ENCODE measurements at regions of chrX and their contacts with region 1.

Region 1: DNA sequence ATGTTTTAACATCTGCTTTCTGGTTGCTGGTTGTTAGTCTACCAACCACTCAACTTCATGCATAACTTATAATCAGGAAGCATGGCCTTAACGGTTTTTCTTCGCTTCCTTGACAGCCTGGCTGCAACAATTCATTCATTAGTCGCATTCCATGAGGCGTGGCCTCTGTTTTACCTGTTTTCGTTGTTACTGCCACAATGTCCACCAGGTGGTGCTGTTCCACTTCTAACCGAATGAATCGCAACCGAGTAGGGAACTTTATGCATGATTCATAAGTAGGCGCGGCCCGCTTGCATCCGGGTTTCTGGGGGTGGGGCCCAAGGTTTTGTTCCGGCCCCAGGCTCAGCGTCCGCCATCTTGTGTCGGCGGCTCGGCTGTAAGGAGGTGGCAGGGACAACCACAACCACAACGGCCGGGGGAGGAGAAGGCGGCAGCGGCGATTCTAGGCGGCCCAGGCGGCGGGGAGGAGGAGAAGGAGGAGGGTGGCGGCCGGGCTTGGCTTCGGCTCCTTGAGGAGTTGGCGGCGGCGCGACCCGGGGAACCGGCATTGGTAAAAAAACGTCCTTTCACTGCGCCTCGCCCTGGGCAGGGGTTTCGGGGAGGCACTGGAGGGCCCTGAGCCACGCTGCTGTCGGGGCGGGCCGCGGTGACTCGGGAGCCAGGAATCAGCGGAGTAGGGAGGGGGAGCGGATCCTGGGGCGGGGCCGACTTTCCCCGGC is at the start of gene UBA1:
- DNase-seq: peak; percentile 72
- ATAC-seq: peak; percentile 71
- H3K4me3 Mint-ChIP-seq: peak within 1 kb of the TSS; percentile 95
- H3K27ac Mint-ChIP-seq: peak within 1 kb of the TSS; percentile 96
- H3K4me1 Mint-ChIP-seq: peaks cover 58% of the 10 kb centered on the region
- H3K27me3 Mint-ChIP-seq: no peaks in the 10 kb centered on the region
- CTCF ChIP-seq: no peak
- total RNA-seq, gene UBA1: 229 and 235 TPM in 2 replicates

Region 2: GRCh38 chrX:47217642-47218279 is 24.1 kb after region 1 on chrX:
- CTCF ChIA-PET with region 1: interaction called, 3 read pairs
- POLR2A ChIA-PET with region 1: interaction called, 15 read pairs
- intact Hi-C with region 1: loop called (anchors 1 kb)
- DNase-seq: peak; percentile 84
- ATAC-seq: peak; percentile 80
- H3K4me3 Mint-ChIP-seq: peak overlapping the region; percentile 92
- H3K27ac Mint-ChIP-seq: peak overlapping the region; percentile 99
- H3K4me1 Mint-ChIP-seq: peaks cover 40% of the 10 kb centered on the region
- H3K27me3 Mint-ChIP-seq: no peaks in the 10 kb centered on the region
- CTCF ChIP-seq: no peak

Region 3: DNA sequence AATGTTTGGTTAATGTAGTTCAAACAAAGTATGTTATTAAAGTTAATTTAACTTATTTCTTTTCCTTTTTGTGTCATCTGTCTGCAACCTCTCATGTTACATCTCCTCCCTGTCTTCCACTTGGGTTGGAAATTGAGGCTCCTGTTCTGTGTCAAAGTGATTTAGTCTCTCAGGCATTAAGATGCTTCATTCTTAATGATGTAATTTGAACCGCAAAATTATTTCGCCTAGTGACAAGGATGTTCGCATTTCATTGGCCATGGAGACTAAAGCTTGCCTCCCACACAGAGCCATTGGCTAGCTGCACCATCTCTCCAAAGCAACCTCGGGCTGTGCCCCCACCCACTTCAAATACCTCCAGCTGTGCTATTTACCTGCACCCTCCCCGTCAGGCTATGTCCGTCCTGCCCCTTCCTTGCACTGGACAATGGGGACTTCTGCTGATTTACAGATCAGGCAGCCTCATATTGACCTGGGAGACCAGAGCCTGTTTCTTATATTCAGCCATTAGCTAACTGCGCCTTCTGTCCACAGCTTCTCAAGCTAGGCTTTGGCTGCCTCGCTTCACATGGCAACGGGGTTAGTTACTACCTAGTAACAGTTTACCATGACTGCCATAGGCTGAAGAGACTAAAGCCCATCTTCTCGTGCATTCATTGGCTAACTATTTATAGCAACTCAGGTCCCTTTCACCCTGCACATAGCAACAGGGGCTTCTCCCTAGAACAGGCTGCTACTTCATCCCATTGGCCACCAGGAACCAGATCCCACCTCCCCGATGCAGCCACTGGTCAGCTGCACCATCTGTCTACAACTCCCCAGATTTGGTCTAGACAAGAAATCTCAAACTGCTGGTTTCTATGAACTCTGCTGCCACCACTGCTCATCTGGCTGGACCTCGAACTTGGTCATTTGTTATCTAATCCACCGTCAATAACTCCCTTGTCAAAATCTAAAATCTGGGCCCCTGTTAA is 168.2 kb after region 1 on chrX:
- CTCF ChIA-PET with region 1: no interaction called
- POLR2A ChIA-PET with region 1: interaction called, 4 read pairs
- intact Hi-C with region 1: loop called (anchors 1 kb)
- DNase-seq: peak; percentile 51
- ATAC-seq: peak; percentile 79
- H3K4me3 Mint-ChIP-seq: peak overlapping the region; percentile 87
- H3K27ac Mint-ChIP-seq: peak overlapping the region; percentile 97
- H3K4me1 Mint-ChIP-seq: peaks cover 31% of the 10 kb centered on the region
- H3K27me3 Mint-ChIP-seq: no peaks in the 10 kb centered on the region
- CTCF ChIP-seq: no peak

Region 4: DNA sequence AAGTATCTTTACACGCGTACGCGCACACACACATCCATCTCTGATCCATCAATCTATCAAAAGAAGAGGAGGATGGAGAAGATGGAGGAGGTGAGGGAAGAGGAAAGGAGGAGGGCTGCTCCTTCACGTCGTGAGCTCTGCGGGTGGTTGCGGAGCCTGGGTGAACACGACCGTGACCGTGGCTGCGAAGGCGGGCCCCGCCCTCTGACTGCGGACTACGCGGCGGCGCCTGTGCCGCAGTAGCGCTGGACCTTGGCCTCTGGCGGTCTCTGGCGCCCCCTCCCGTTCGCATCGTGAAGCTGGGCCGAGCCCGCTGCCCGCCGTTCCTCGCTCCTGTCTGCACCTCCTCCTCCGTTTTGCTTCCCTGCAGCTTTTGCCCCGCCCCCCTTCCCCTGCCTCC is 329.7 kb after region 1 on chrX:
- CTCF ChIA-PET with region 1: interaction called, 21 read pairs
- POLR2A ChIA-PET with region 1: interaction called, 10 read pairs
- intact Hi-C with region 1: loop called (anchors 1 kb)
- DNase-seq: peak; percentile 78
- ATAC-seq: peak; percentile 99
- H3K4me3 Mint-ChIP-seq: peak overlapping the region; percentile 73
- H3K27ac Mint-ChIP-seq: peak overlapping the region; percentile 46
- H3K4me1 Mint-ChIP-seq: peaks cover 3% of the 10 kb centered on the region
- H3K27me3 Mint-ChIP-seq: no peaks in the 10 kb centered on the region
- CTCF ChIP-seq: no peak

Region 5: GRCh38 chrX:47650164-47651042 is 456.8 kb after region 1 on chrX and contains the start of gene ELK1:
- CTCF ChIA-PET with region 1: no interaction called
- POLR2A ChIA-PET with region 1: interaction called, 4 read pairs
- intact Hi-C with region 1: loop called (anchors 1 kb)
- DNase-seq: peak; percentile 76
- ATAC-seq: peak; percentile 92
- H3K4me3 Mint-ChIP-seq: peak within 1 kb of the TSS; percentile 88
- H3K27ac Mint-ChIP-seq: peak within 1 kb of the TSS; percentile 87
- H3K4me1 Mint-ChIP-seq: peaks cover 29% of the 10 kb centered on the region
- H3K27me3 Mint-ChIP-seq: no peaks in the 10 kb centered on the region
- CTCF ChIP-seq: no peak
- total RNA-seq, gene ELK1: 26.5 and 31.8 TPM in 2 replicates

Measured in activated B cell treated with CpG ODN at 0.5 μM for 24 hours (primary cell).